ENCODE measurements at regions of chr11 and their contacts with region 1.

Region 1: DNA sequence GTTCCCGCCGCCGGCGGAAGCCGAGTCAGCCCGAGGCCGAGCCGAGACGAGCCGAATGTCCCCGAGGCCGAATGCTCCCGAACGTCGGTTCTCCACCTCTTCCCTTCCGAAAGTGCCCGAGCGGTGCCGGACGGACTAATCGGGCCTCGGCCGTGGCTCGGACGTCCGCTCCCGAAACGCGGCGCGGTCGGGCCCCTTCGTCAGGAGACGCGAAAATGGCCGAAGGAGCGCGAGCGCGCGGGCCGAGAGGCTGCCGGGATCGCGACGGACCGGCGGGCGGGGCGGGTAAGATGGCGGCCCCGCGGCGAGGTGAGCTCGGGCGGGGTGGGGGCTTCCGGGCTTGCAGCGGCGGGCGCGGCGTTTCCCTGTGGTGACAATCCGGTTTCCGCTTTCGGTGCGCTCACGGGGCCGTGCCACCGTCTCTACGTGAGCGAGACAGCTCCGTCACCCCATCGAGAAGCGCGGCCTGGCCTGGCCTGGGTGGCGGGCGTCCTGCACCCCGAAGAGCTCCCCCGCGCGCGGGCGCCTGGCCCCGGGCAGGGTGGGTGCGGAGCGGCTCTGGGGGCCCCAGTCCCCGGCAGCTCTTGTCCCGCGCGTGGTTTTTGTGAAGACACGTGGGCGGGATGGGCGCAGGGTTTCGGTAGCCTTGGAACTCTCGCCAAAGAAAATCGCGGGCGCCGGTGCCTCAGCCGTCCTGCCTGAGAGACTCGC is at the start of gene TMEM80:
- DNase-seq: peak; percentile 95
- ATAC-seq: peak; percentile 71
- H3K4me3 Mint-ChIP-seq: peak within 1 kb of the TSS; percentile 87
- H3K27ac Mint-ChIP-seq: peak within 1 kb of the TSS; percentile 94
- H3K4me1 Mint-ChIP-seq: peaks cover 46% of the 10 kb centered on the region
- H3K27me3 Mint-ChIP-seq: no peaks in the 10 kb centered on the region
- CTCF ChIP-seq: no peak
- total RNA-seq, gene TMEM80: 34.1 and 44.4 TPM in 2 replicates

Region 2: GRCh38 chr11:554824-555472 is 140.7 kb before region 1 on chr11:
- CTCF ChIA-PET with region 1: interaction called, 5 read pairs
- POLR2A ChIA-PET with region 1: interaction called, 22 read pairs
- intact Hi-C with region 1: no loop called
- DNase-seq: peak; percentile 70
- ATAC-seq: peak; percentile 93
- H3K4me3 Mint-ChIP-seq: peak overlapping the region; percentile 24
- H3K27ac Mint-ChIP-seq: no peak overlapping the region
- H3K4me1 Mint-ChIP-seq: peaks cover 6% of the 10 kb centered on the region
- H3K27me3 Mint-ChIP-seq: no peaks in the 10 kb centered on the region
- CTCF ChIP-seq: no peak

Region 3: GRCh38 chr11:615504-616319 is 80.0 kb before region 1 on chr11 and contains the start of gene IRF7:
- CTCF ChIA-PET with region 1: no interaction called
- POLR2A ChIA-PET with region 1: interaction called, 26 read pairs
- intact Hi-C with region 1: loop called (anchors 1 kb)
- DNase-seq: peak; percentile 92
- ATAC-seq: peak; percentile 95
- H3K4me3 Mint-ChIP-seq: peak within 1 kb of the TSS; percentile 90
- H3K27ac Mint-ChIP-seq: peak within 1 kb of the TSS; percentile 88
- H3K4me1 Mint-ChIP-seq: peaks cover 25% of the 10 kb centered on the region
- H3K27me3 Mint-ChIP-seq: no peaks in the 10 kb centered on the region
- CTCF ChIP-seq: no peak
- total RNA-seq, gene IRF7: 74.1 and 75.5 TPM in 2 replicates

Region 4: GRCh38 chr11:720642-721246 is 25.1 kb after region 1 on chr11:
- CTCF ChIA-PET with region 1: interaction called, 70 read pairs
- POLR2A ChIA-PET with region 1: interaction called, 95 read pairs
- intact Hi-C with region 1: loop called (anchors 1 kb)
- DNase-seq: no peak
- ATAC-seq: peak; percentile 25
- H3K4me3 Mint-ChIP-seq: peak overlapping the region; percentile 35
- H3K27ac Mint-ChIP-seq: no peak overlapping the region
- H3K4me1 Mint-ChIP-seq: peaks cover 21% of the 10 kb centered on the region
- H3K27me3 Mint-ChIP-seq: peaks cover 6% of the 10 kb centered on the region
- CTCF ChIP-seq: no peak

Region 5: DNA sequence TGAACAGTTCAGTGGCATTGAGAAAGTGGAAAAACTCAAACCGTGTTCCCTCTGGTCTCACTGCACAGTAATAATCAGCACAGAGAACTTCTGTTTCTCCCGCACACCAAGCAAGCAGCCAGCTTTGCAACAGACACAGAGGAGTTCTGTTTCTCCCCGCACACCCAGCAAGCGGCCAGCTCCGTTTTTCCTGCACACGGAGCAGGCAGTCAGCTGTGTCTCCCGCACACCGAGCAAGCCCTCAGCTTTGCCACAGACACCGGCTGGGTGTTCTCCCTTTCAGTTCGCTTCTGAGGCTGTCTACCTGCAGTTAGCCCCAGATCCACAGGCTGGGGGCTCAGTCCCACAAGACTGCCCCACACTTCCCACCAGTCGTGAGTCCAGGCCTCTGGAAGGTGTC is 41.7 kb after region 1 on chr11:
- CTCF ChIA-PET with region 1: no interaction called
- POLR2A ChIA-PET with region 1: interaction called, 12 read pairs
- intact Hi-C with region 1: no loop called
- DNase-seq: no peak
- ATAC-seq: no peak
- H3K4me3 Mint-ChIP-seq: no peak overlapping the region
- H3K27ac Mint-ChIP-seq: no peak overlapping the region
- H3K4me1 Mint-ChIP-seq: peaks cover 11% of the 10 kb centered on the region
- H3K27me3 Mint-ChIP-seq: peaks cover 20% of the 10 kb centered on the region
- CTCF ChIP-seq: no peak

Region 6: GRCh38 chr11:1389103-1389931 is 693.6 kb after region 1 on chr11:
- CTCF ChIA-PET with region 1: no interaction called
- POLR2A ChIA-PET with region 1: interaction called, 4 read pairs
- intact Hi-C with region 1: loop called (anchors 10 kb)
- DNase-seq: peak; percentile 94
- ATAC-seq: peak; percentile 95
- H3K4me3 Mint-ChIP-seq: peak overlapping the region; percentile 74
- H3K27ac Mint-ChIP-seq: no peak overlapping the region
- H3K4me1 Mint-ChIP-seq: peaks cover 33% of the 10 kb centered on the region
- H3K27me3 Mint-ChIP-seq: peaks cover 26% of the 10 kb centered on the region
- CTCF ChIP-seq: no peak